ENCODE measurements at regions of chr20 and their contacts with region 1.

Region 1: GRCh38 chr20:64062596-64063388 is at the start of gene TCEA2:
- DNase-seq: peak; percentile 97
- H3K4me3 Mint-ChIP-seq: peak within 1 kb of the TSS; percentile 85
- H3K27ac Mint-ChIP-seq: peak within 1 kb of the TSS; percentile 69
- H3K4me1 Mint-ChIP-seq: peaks cover 44% of the 10 kb centered on the region
- H3K27me3 Mint-ChIP-seq: no peaks in the 10 kb centered on the region
- total RNA-seq, gene TCEA2: 27.3 to 29.9 TPM

Region 2: GRCh38 chr20:63955827-63956663 is 106.7 kb before region 1 on chr20 and contains the start of gene UCKL1:
- CTCF ChIA-PET with region 1: no interaction called
- POLR2A ChIA-PET with region 1: no interaction called
- intact Hi-C with region 1: loop called (anchors 1 kb)
- DNase-seq: peak; percentile 92
- H3K4me3 Mint-ChIP-seq: peak within 1 kb of the TSS; percentile 81
- H3K27ac Mint-ChIP-seq: peak within 1 kb of the TSS; percentile 89
- H3K4me1 Mint-ChIP-seq: peaks cover 35% of the 10 kb centered on the region
- H3K27me3 Mint-ChIP-seq: no peaks in the 10 kb centered on the region
- total RNA-seq, gene UCKL1: 26.6 to 29.6 TPM

Region 3: GRCh38 chr20:64027981-64028685 is 34.7 kb before region 1 on chr20:
- CTCF ChIA-PET with region 1: no interaction called
- POLR2A ChIA-PET with region 1: no interaction called
- intact Hi-C with region 1: no loop called
- DNase-seq: no peak
- H3K4me3 Mint-ChIP-seq: no peak overlapping the region
- H3K27ac Mint-ChIP-seq: no peak overlapping the region
- H3K4me1 Mint-ChIP-seq: no peaks in the 10 kb centered on the region
- H3K27me3 Mint-ChIP-seq: no peaks in the 10 kb centered on the region

Region 4: GRCh38 chr20:64038565-64039292 is 24.1 kb before region 1 on chr20:
- CTCF ChIA-PET with region 1: interaction called, 38 read pairs
- POLR2A ChIA-PET with region 1: interaction called, 5 read pairs
- intact Hi-C with region 1: loop called (anchors 1 kb)
- DNase-seq: peak; percentile 84
- H3K4me3 Mint-ChIP-seq: peak overlapping the region; percentile 60
- H3K27ac Mint-ChIP-seq: no peak overlapping the region
- H3K4me1 Mint-ChIP-seq: peaks cover 43% of the 10 kb centered on the region
- H3K27me3 Mint-ChIP-seq: peaks cover 2% of the 10 kb centered on the region

Region 5: GRCh38 chr20:64079273-64080012 is 16.7 kb after region 1 on chr20 and contains the start of gene RGS19:
- CTCF ChIA-PET with region 1: interaction called, 3 read pairs
- POLR2A ChIA-PET with region 1: interaction called, 5 read pairs
- intact Hi-C with region 1: loop called (anchors 1 kb)
- DNase-seq: peak; percentile 76
- H3K4me3 Mint-ChIP-seq: peak within 1 kb of the TSS; percentile 90
- H3K27ac Mint-ChIP-seq: peak within 1 kb of the TSS; percentile 92
- H3K4me1 Mint-ChIP-seq: peaks cover 27% of the 10 kb centered on the region
- H3K27me3 Mint-ChIP-seq: peaks cover 3% of the 10 kb centered on the region
- total RNA-seq, gene RGS19: 43.2 to 44.4 TPM